ENCODE measurements at regions of chr6 and their contacts with region 1.

Region 1: GRCh38 chr6:31901953-31902643 is at the start of gene ZBTB12:
- DNase-seq: peak; percentile 94
- H3K4me3 ChIP-seq: peak within 1 kb of the TSS; percentile 51 to 72 (median 60)
- H3K27ac ChIP-seq: peak within 1 kb of the TSS; percentile 80 to 92 (median 87)
- H3K4me1 ChIP-seq: peaks cover 8 to 38% (median 24%) of the 10 kb centered on the region in 4 donors
- H3K27me3 ChIP-seq: no peaks in the 10 kb centered on the region
- CTCF ChIP-seq: peak in 1 of 5 experiments; percentile 36
- EP300 ChIP-seq: no peak
- POLR2A ChIP-seq: peak; percentile 60
- total RNA-seq, gene ZBTB12: 0.14 to 1.3 (median 0.77) TPM

Region 2: GRCh38 chr6:31952140-31952805 is 50.2 kb after region 1 on chr6:
- in situ Hi-C with region 1: loop called in 1 of 4 experiments (anchors 10 kb)
- intact Hi-C with region 1: loop called (anchors 5 kb)
- DNase-seq: peak; percentile 61
- H3K4me3 ChIP-seq: no peak overlapping the region
- H3K27ac ChIP-seq: peak overlapping the region in 2 of 4 donors; percentile 47 to 54
- H3K4me1 ChIP-seq: peaks cover 0 to under 1% (median 0%) of the 10 kb centered on the region in 4 donors
- H3K27me3 ChIP-seq: no peaks in the 10 kb centered on the region
- CTCF ChIP-seq: peak; percentile 65 to 74 (median 72)
- EP300 ChIP-seq: no peak
- POLR2A ChIP-seq: no peak

Region 3: DNA sequence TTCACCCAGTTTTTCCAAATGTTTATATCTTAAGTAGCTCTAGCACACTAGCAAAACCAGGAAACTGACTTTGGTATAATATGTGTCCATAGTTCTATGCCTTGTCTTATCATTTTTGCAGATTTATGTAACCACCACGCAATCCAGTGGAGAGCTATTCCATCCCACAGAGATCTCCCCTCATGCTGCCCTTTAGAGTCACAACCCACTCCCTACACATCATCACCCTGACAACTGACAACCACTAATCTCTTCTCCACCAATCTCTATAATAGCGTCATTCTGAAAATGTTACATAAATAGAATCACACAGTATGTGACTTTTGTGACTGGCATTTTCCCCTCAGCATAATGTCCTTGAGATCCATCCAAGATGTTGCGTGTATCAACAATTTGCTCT is 598.9 kb after region 1 on chr6:
- in situ Hi-C with region 1: no loop called
- intact Hi-C with region 1: no loop called
- DNase-seq: no peak
- H3K4me3 ChIP-seq: no peak overlapping the region
- H3K27ac ChIP-seq: no peak overlapping the region
- H3K4me1 ChIP-seq: no peaks in the 10 kb centered on the region
- H3K27me3 ChIP-seq: no peaks in the 10 kb centered on the region
- CTCF ChIP-seq: no peak
- EP300 ChIP-seq: no peak
- POLR2A ChIP-seq: no peak

Measured in transverse colon (tissue), 4 donors.